PC-9 (cell line): ENCODE measurements at regions of chr19 and their contacts with region 1.

Region 1: DNA sequence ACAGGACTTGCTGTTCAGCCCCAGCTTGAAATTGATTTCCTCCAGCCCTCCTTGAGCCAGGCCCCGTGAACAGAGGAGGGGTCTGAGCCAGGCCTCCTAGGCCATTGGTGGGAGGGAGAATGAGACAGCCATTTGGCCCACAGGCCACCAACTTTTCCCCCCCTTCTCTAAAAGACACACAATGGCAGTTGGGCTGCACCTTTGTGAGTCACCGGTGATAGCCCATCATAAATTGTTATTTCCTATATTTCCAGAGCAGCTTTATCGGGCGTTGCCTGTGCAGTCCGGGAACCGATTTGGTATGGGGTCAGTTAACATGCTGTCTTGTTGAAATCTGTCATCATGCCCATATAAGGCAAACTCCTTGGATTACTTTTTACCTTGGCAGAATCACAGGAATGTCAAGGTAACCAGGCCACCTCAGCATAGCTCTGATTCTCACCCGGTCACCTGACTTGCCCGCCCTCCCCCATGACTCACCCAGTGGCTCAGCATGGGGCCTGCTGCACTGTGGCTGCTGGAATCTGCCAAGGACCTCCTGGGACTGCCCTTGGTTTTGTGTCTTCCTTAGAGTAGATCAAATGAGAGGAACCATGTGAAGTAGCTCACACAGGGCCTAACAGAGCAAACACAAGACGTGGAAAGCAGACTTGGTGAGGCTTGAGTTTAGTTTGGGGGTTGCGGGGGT is 36.1 kb downstream of the ACTN4 start:
- DNase-seq: peak; percentile 97 to 100
- H3K4me3 ChIP-seq: peak overlapping the region; percentile 36; the same call in 1 of the 2 replicates
- H3K27ac ChIP-seq: peak overlapping the region; percentile 100
- H3K4me1 ChIP-seq: peaks cover 95% of the 10 kb centered on the region
- H3K27me3 ChIP-seq: no peaks in the 10 kb centered on the region
- CTCF ChIP-seq: no peak

Region 2: GRCh38 chr19:38666663-38667511 is 16.6 kb before region 1 on chr19:
- CTCF ChIA-PET with region 1: interaction called, 4 read pairs
- POLR2A ChIA-PET with region 1: interaction called, 7 read pairs
- intact Hi-C with region 1: loop called (anchors 1 kb)
- DNase-seq: no peak
- H3K4me3 ChIP-seq: no peak overlapping the region
- H3K27ac ChIP-seq: peak overlapping the region; percentile 66
- H3K4me1 ChIP-seq: peaks cover 66% of the 10 kb centered on the region
- H3K27me3 ChIP-seq: no peaks in the 10 kb centered on the region
- CTCF ChIP-seq: no peak

Region 3: GRCh38 chr19:38718747-38719543 is 35.4 kb after region 1 on chr19:
- CTCF ChIA-PET with region 1: interaction called, 3 read pairs
- POLR2A ChIA-PET with region 1: interaction called, 18 read pairs
- intact Hi-C with region 1: loop called (anchors 1 kb)
- DNase-seq: peak; percentile 56 to 93
- H3K4me3 ChIP-seq: no peak overlapping the region
- H3K27ac ChIP-seq: peak overlapping the region; percentile 80
- H3K4me1 ChIP-seq: peaks cover 11% of the 10 kb centered on the region
- H3K27me3 ChIP-seq: no peaks in the 10 kb centered on the region
- CTCF ChIP-seq: no peak; the same call in 1 of the 2 replicates

Region 4: GRCh38 chr19:38849860-38850435 is 166.4 kb after region 1 on chr19 and contains the start of gene HNRNPL:
- CTCF ChIA-PET with region 1: no interaction called
- POLR2A ChIA-PET with region 1: no interaction called
- intact Hi-C with region 1: loop called (anchors 5 kb)
- DNase-seq: peak; percentile 99
- H3K4me3 ChIP-seq: peak within 1 kb of the TSS; percentile 79
- H3K27ac ChIP-seq: peak within 1 kb of the TSS; percentile 93
- H3K4me1 ChIP-seq: peaks cover 35% of the 10 kb centered on the region
- H3K27me3 ChIP-seq: no peaks in the 10 kb centered on the region
- CTCF ChIP-seq: peak; percentile 63
- total RNA-seq, gene HNRNPL: 368 and 443 TPM in 2 replicates